Heart left ventricle (tissue), 16 donors: ENCODE measurements at regions of chr1 and their contacts with region 1.

Region 1: DNA sequence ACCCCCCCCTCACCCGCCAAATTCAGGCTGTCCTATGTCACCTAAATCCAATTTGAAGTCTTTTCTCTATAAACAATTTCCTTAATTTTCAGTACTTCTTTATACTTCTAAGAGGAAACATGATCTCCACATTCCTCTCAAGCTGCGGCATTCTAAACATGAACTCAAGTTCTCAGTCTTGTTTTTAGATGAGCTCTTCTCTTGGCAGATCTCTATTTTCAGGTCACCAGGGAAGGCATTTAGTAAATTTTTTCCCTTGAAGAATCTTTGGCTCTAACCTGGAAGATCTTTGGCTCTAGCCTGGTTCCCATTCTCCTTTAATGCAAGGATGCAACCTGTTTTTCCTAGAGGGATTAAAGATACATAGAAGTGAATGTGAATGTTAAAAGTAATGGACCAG is 193.4 kb downstream of the ATG4C start:
- DNase-seq: no peak
- ATAC-seq: no peak
- H3K4me3 ChIP-seq: no peak overlapping the region
- H3K27ac ChIP-seq: no peak overlapping the region
- H3K4me1 ChIP-seq: no peaks in the 10 kb centered on the region
- H3K27me3 ChIP-seq: peaks cover 0 to 3% (median 0%) of the 10 kb centered on the region in 9 donors
- CTCF ChIP-seq: no peak
- POLR2A ChIP-seq: no peak

Region 2: DNA sequence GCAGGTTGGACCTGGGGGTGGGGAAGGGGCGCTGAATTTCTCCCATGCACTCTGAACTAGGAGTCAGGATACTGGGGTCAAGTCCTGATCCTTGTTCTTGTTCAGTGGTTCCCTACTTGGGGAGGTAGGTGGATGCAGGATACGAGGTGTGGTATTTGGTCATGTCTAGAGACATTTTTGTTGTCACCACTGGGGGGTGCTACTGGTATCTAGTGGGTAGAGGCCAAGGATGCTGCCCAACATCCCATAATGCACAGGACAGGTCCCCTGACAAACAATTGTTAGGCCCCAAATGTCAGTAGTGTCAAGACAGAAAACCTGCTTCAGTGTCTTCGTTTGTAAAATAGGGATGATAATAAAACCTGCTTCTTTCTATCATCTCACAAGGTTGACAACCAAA is 86.0 kb after region 1 on chr1:
- intact Hi-C with region 1: loop called in 1 of 10 experiments (anchors 10 kb)
- DNase-seq: no peak
- ATAC-seq: no peak
- H3K4me3 ChIP-seq: no peak overlapping the region
- H3K27ac ChIP-seq: no peak overlapping the region
- H3K4me1 ChIP-seq: no peaks in the 10 kb centered on the region
- H3K27me3 ChIP-seq: peaks cover 0 to 3% (median 0%) of the 10 kb centered on the region in 9 donors
- CTCF ChIP-seq: no peak
- POLR2A ChIP-seq: no peak

Region 3: DNA sequence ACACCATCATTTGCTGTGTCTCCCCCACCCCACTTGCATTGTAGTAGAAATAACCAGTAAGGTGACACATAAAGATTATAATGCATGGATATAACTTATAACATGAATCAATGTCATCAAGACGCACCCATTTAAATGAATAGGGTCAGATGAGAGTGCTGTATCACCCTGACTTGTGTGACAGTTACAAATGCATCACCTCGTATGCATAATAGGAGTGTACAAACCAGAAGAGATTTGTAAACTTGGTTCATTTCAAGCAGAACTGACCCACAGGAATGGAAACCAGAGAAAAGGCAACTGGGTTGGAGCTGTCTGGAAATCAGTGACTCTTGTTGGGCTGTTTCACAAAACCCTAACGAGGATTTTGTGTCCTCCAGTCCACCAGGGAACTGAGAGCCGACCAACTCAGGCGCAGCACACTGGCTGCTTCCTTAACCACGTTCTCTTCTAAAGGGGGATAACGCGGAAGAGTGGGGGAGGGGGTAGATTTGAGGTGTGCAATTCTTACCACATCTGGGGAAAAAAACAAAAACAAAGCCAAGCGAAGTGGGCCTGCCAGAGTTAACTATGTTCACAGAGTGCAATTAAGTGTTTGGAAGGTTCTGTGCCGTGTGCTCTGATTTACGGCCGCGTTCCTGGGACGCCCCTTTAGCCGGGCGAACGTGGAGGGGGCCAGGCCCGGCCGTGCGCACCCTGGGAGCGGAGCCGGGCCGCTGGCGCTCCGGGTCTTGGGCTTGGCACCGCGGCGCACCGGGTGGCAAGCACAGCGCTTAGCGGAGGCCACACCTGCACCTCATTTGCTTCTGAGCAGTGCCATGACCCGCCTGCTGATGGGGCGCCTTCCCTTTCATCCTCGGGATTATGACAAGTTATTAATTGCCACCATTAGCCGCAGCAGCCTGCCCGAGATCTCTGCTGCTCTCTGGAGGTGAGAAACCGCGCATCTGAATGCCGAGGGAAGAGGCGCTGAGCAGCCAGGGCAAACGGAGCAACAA is 96.2 kb after region 1 on chr1:
- intact Hi-C with region 1: loop called in 2 of 10 experiments (anchors 10 kb)
- DNase-seq: peak in 1 of 5 donors; percentile 25
- ATAC-seq: peak; percentile 37 to 74 (median 45)
- H3K4me3 ChIP-seq: peak overlapping the region in 11 of 12 donors; percentile 15 to 48 (median 37)
- H3K27ac ChIP-seq: no peak overlapping the region
- H3K4me1 ChIP-seq: peaks cover 0 to 5% (median 0%) of the 10 kb centered on the region in 12 donors
- H3K27me3 ChIP-seq: peaks cover 0 to 66% (median 31%) of the 10 kb centered on the region in 9 donors
- CTCF ChIP-seq: peak in 7 of 12 donors; percentile 12 to 49 (median 31)
- POLR2A ChIP-seq: no peak

Region 4: GRCh38 chr1:63442141-63442475 is 464.7 kb after region 1 on chr1:
- intact Hi-C with region 1: loop called in 1 of 10 experiments (anchors 10 kb)
- DNase-seq: no peak
- ATAC-seq: no peak
- H3K4me3 ChIP-seq: no peak overlapping the region
- H3K27ac ChIP-seq: no peak overlapping the region
- H3K4me1 ChIP-seq: no peaks in the 10 kb centered on the region
- H3K27me3 ChIP-seq: no peaks in the 10 kb centered on the region
- CTCF ChIP-seq: no peak
- POLR2A ChIP-seq: no peak